ENCODE measurements at regions of chr1 and their contacts with region 1.

Region 1: GRCh38 chr1:26233903-26234643 is at the start of gene CEP85:
- H3K4me3 Mint-ChIP-seq: peak within 1 kb of the TSS; percentile 94
- H3K27ac Mint-ChIP-seq: peak within 1 kb of the TSS; percentile 98
- H3K4me1 Mint-ChIP-seq: peaks cover 41% of the 10 kb centered on the region
- H3K27me3 Mint-ChIP-seq: peaks cover 2% of the 10 kb centered on the region

Region 2: DNA sequence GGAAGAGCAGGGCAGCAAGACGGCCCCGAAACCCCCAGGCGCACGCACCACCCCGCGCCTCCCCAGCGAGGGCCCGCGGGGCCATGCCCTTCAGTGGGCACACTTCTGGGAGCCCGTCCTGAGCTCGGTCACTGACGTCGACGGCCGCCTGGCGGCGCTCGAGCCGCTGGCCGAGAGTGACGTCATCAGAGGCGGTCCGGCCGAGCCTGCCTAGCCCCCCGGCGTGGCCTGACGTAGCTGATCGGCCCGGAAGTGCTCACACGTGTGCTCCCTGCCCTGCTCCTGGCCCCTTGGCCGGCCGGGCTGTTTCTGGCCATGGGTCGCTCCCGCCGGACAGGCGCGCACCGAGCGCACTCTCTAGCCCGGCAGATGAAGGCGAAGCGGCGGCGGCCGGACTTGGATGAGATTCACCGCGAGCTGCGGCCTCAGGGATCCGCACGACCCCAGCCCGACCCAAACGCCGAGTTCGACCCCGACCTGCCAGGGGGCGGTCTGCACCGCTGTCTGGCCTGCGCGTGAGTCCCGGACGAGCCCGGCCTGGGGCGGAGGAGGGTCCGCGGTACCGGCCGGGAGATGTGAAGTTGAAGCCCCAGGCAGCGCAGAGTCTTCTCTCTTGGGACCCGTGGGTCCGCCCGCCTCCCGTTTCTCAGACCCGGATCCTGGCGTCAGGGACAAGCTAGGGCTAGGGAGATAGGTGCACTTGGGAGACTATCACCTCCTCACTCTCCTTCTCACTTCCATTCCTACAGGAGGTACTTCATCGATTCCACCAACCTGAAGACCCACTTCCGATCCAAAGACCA is 64.2 kb before region 1 on chr1 and contains the start of gene ZNF593:
- intact Hi-C with region 1: loop called (anchors 5 kb)
- H3K4me3 Mint-ChIP-seq: peak within 1 kb of the TSS; percentile 93
- H3K27ac Mint-ChIP-seq: peak within 1 kb of the TSS; percentile 91
- H3K4me1 Mint-ChIP-seq: peaks cover 25% of the 10 kb centered on the region
- H3K27me3 Mint-ChIP-seq: peaks cover 17% of the 10 kb centered on the region

Region 3: DNA sequence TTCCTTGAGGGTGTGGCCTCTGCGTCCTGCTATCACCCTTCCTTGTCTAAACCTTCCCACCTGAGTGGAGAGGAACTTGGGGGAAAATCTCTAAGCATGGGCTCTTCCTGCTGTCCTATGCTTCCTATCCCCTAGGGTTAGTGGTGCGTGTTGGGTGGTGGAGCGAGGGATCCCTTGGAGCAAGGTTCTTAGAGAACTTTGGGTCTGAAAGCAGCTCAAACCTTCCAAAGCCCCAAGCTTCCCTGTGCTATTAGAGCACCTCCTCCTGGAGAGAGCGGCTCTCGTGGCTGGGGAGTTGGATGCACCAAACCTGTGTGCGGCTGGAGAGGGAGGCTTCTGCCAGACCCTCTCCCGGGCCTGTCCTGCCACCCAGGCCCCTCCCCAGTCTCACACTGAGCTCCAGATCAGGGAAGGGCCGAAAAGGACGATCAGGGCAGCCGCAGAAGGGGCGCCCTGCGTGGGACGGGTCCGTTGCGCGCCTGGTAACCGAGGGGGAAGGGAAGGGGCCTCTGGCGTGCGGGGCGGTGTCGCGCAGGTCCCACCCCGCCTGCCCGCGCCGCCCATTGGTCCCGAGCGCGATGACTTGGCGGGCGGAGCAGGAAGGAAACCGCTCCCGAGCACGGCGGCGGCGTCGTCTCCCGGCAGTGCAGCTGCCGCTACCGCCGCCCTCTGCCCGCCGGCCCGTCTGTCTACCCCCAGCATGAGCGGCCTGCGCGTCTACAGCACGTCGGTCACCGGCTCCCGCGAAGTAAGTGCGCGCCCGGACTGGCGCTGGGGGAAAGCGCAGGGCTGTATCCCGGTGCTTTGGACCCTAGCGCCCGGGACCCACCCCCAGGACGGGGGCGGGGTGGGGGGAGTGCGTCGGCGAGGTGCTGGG is 45.6 kb after region 1 on chr1 and contains the start of gene SH3BGRL3:
- intact Hi-C with region 1: loop called (anchors 2 kb)
- H3K4me3 Mint-ChIP-seq: peak within 1 kb of the TSS; percentile 86
- H3K27ac Mint-ChIP-seq: peak within 1 kb of the TSS; percentile 94
- H3K4me1 Mint-ChIP-seq: peaks cover 92% of the 10 kb centered on the region
- H3K27me3 Mint-ChIP-seq: no peaks in the 10 kb centered on the region

Measured in dendritic cell treated with granulocyte-macrophage colony-stimulating factor and Interleukin-4, amounts not matched to agents 40 ng/mL and 50 ng/mL, for 4 days (primary cell).